ENCODE measurements at regions of chr19 and their contacts with region 1.

Region 1: DNA sequence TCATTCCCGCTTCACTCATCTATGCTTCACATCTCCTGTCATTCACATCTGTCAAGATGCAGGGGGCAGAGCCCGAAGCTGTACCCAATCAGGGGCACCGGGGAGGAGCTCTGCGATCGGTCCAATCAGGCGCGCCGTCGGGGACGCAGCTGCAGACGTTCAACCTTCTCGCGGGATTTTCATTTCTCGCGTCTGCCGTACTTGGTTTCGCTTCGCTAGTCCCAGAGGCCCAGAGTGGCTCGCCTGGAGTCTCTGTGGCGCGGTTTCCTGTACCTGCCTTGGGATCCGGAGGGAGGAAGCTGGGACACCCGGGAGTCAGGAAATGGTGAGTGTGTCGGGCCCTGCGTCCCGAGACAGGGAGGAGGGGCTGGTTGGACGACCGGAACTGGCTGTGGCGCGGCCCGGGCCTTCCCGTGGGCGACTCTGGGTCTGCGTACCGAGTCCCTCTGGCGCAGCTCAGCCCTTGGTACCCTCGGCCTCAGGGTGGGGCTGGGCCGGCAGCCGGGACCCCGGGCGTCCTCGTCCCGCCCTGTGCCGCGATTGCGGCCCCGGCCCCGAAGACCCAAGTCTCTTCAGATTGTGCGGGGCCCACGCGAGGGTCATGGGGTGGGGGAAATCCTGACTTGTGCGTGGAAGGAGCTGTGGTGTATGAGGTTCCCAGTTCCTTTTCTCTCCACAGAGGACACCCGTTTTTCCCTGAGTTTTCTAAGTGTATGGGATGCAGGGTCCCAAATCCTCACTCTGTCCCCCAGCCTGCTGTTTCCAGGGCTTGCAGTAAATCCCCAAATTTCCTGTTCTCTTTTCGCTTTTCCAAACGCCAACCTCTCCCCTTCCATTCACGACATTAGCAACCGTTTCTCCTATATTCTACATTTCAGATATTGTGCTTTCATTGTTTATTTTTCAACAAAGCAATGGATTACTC is at the start of gene ZNF136:
- DNase-seq: peak; percentile 94
- ATAC-seq: peak; percentile 99
- H3K4me3 ChIP-seq: peak within 1 kb of the TSS; percentile 58 to 96 (median 91)
- H3K4me3 Mint-ChIP-seq: peak within 1 kb of the TSS; percentile 92
- H3K27ac ChIP-seq: peak within 1 kb of the TSS; percentile 96 to 99
- H3K27ac Mint-ChIP-seq: peak within 1 kb of the TSS; percentile 99
- H3K4me1 ChIP-seq: peaks cover 10 to 15% of the 10 kb centered on the region in 2 donors
- H3K4me1 Mint-ChIP-seq: peaks cover 34% of the 10 kb centered on the region
- H3K27me3 ChIP-seq: no peaks in the 10 kb centered on the region
- H3K27me3 Mint-ChIP-seq: no peaks in the 10 kb centered on the region
- CTCF ChIP-seq: no peak
- total RNA-seq, gene ZNF136: 30.8 and 33.5 TPM in 2 replicates

Region 2: DNA sequence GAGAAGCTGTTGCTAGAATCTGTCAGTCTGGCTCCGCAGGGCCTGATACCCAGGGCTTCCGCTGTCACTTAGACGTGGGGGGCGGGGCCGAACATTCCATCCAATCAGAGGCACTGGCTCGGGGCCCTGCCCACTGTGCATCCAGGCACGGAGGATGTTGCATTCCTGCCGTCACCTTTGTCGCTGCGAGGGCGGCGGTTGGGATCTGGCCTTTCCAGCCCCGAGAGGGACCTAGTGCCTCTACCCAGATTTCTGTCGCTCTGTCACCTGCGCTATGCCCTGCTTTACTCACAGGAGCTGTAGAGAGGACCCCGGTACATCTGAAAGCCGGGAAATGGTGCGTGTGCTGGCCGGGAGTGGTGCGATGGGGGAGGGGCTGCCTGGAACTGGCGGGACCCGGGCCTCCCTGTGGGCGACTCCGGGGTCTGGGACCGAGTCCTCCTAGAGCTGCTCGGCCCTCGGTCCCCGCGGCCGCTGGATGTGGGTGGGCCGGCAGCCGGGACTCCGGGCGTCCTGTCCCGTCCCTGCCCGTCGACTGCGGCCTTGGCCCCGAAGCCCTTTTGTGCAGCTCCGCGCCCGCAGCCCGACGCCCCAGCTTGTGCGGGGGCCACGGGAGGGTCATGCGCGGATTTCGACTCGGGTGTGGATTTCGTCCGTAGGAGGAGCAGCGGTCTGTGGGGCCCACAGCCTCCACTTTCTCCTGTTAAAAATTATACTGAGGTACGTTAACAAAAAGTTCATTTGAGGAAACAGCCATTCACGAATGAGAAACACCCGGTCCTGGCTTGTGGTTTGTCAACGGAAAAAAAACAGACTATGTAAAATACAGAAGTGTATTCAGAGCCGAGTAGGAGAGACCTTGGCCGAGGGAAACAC is 314.3 kb before region 1 on chr19 and contains the start of gene ZNF439:
- CTCF ChIA-PET with region 1: no interaction called
- POLR2A ChIA-PET with region 1: no interaction called
- intact Hi-C with region 1: loop called (anchors 1 kb)
- DNase-seq: peak; percentile 93
- ATAC-seq: peak; percentile 97
- H3K4me3 ChIP-seq: peak within 1 kb of the TSS; percentile 57 to 85 (median 83)
- H3K4me3 Mint-ChIP-seq: peak within 1 kb of the TSS; percentile 90
- H3K27ac ChIP-seq: peak within 1 kb of the TSS; percentile 71 to 72
- H3K27ac Mint-ChIP-seq: peak within 1 kb of the TSS; percentile 96
- H3K4me1 ChIP-seq: peaks cover 20 to 24% of the 10 kb centered on the region in 2 donors
- H3K4me1 Mint-ChIP-seq: peaks cover 29% of the 10 kb centered on the region
- H3K27me3 ChIP-seq: no peaks in the 10 kb centered on the region
- H3K27me3 Mint-ChIP-seq: no peaks in the 10 kb centered on the region
- CTCF ChIP-seq: no peak
- total RNA-seq, gene ZNF439: 48.6 and 52.3 TPM in 2 replicates

Region 3: GRCh38 chr19:12294249-12295158 is 131.4 kb after region 1 on chr19 and contains the start of gene ZNF44:
- CTCF ChIA-PET with region 1: no interaction called
- POLR2A ChIA-PET with region 1: no interaction called
- intact Hi-C with region 1: loop called (anchors 1 kb)
- DNase-seq: peak; percentile 95
- ATAC-seq: peak; percentile 96
- H3K4me3 ChIP-seq: peak within 1 kb of the TSS; percentile 57 to 96 (median 91)
- H3K4me3 Mint-ChIP-seq: peak within 1 kb of the TSS; percentile 99
- H3K27ac ChIP-seq: peak within 1 kb of the TSS; percentile 82 to 89
- H3K27ac Mint-ChIP-seq: peak within 1 kb of the TSS; percentile 94
- H3K4me1 ChIP-seq: peaks cover 8 to 17% of the 10 kb centered on the region in 2 donors
- H3K4me1 Mint-ChIP-seq: peaks cover 31% of the 10 kb centered on the region
- H3K27me3 ChIP-seq: no peaks in the 10 kb centered on the region
- H3K27me3 Mint-ChIP-seq: no peaks in the 10 kb centered on the region
- CTCF ChIP-seq: no peak
- total RNA-seq, gene ZNF44: 27.8 and 28.0 TPM in 2 replicates

Measured in B cell (primary cell).